Activated CD8-positive, alpha-beta T cell treated with anti-CD3 and anti-CD28 coated beads, Interleukin-2, amount 10 ng/mL, durations not matched to agents 7 days and 5 days (primary cell): ENCODE measurements at regions of chr5 and their contacts with region 1.

Region 1: GRCh38 chr5:135578685-135579341 is at the start of gene CXCL14:
- DNase-seq: no peak
- ATAC-seq: peak; percentile 39
- H3K4me3 Mint-ChIP-seq: no peak within 1 kb of the TSS
- H3K27ac Mint-ChIP-seq: no peak within 1 kb of the TSS
- H3K4me1 Mint-ChIP-seq: no peaks in the 10 kb centered on the region
- H3K27me3 Mint-ChIP-seq: peaks cover 45% of the 10 kb centered on the region
- total RNA-seq, gene CXCL14: not detected

Region 2: GRCh38 chr5:135565725-135566421 is 12.9 kb before region 1 on chr5:
- CTCF ChIA-PET with region 1: interaction called, 17 read pairs
- POLR2A ChIA-PET with region 1: no interaction called
- DNase-seq: peak; percentile 76
- ATAC-seq: peak; percentile 85
- H3K4me3 Mint-ChIP-seq: no peak overlapping the region
- H3K27ac Mint-ChIP-seq: no peak overlapping the region
- H3K4me1 Mint-ChIP-seq: peaks cover 3% of the 10 kb centered on the region
- H3K27me3 Mint-ChIP-seq: peaks cover 9% of the 10 kb centered on the region